ENCODE measurements at regions of chr2 and their contacts with region 1.

Region 1: GRCh38 chr2:181104512-181105115 is 124.2 kb downstream of the UBE2E3 start:
- H3K4me3 ChIP-seq: no peak overlapping the region
- H3K27ac ChIP-seq: no peak overlapping the region
- H3K4me1 ChIP-seq: peaks cover 3% of the 10 kb centered on the region; the same call in 1 of the 2 replicates
- CTCF ChIP-seq: peak; percentile 83

Region 2: DNA sequence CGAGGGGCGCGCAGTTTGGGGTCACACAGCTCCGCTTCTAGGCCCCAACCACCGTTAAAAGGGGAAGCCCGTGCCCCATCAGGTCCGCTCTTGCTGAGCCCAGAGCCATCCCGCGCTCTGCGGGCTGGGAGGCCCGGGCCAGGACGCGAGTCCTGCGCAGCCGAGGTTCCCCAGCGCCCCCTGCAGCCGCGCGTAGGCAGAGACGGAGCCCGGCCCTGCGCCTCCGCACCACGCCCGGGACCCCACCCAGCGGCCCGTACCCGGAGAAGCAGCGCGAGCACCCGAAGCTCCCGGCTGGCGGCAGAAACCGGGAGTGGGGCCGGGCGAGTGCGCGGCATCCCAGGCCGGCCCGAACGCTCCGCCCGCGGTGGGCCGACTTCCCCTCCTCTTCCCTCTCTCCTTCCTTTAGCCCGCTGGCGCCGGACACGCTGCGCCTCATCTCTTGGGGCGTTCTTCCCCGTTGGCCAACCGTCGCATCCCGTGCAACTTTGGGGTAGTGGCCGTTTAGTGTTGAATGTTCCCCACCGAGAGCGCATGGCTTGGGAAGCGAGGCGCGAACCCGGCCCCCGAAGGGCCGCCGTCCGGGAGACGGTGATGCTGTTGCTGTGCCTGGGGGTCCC is 352.6 kb after region 1 on chr2 and contains the start of gene ITGA4:
- CTCF ChIA-PET with region 1: interaction called, 11 read pairs
- POLR2A ChIA-PET with region 1: no interaction called
- H3K4me3 ChIP-seq: peak within 1 kb of the TSS; percentile 73
- H3K27ac ChIP-seq: peak within 1 kb of the TSS; percentile 67; the same call in 1 of the 2 replicates
- H3K4me1 ChIP-seq: peaks cover 4% of the 10 kb centered on the region
- CTCF ChIP-seq: peak; percentile 89

Region 3: GRCh38 chr2:181466661-181467576 is 362.3 kb after region 1 on chr2:
- CTCF ChIA-PET with region 1: interaction called, 29 read pairs
- POLR2A ChIA-PET with region 1: no interaction called
- H3K4me3 ChIP-seq: no peak overlapping the region
- H3K27ac ChIP-seq: no peak overlapping the region
- H3K4me1 ChIP-seq: peaks cover 4% of the 10 kb centered on the region
- CTCF ChIP-seq: no peak; the same call in 1 of the 2 replicates